Breast epithelium (tissue), 4 donors: ENCODE measurements at regions of chr9 and their contacts with region 1.

Region 1: DNA sequence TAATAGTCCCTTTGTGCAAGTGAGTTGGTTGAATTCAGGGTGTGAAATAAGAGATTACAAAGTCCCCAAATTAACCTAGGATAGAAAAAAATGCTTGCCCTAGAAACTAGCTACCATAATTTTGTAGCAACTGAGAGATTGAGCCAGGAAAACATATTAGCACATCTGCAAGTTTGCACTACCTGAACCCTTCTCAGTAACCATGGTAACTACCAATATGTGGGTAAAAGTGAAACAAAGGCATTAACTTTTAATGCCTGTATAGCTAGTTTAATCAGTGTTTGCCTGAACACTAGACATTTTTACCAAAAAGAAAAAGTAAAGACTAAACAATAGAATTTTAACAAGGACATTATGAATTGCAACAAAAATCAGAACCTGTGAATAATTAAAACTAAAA is 45.8 kb upstream of the CKS2 start:
- DNase-seq: no peak
- H3K4me3 ChIP-seq: no peak overlapping the region
- H3K27ac ChIP-seq: no peak overlapping the region
- H3K4me1 ChIP-seq: no peaks in the 10 kb centered on the region
- H3K27me3 ChIP-seq: no peaks in the 10 kb centered on the region
- CTCF ChIP-seq: no peak
- POLR2A ChIP-seq: no peak

Region 2: DNA sequence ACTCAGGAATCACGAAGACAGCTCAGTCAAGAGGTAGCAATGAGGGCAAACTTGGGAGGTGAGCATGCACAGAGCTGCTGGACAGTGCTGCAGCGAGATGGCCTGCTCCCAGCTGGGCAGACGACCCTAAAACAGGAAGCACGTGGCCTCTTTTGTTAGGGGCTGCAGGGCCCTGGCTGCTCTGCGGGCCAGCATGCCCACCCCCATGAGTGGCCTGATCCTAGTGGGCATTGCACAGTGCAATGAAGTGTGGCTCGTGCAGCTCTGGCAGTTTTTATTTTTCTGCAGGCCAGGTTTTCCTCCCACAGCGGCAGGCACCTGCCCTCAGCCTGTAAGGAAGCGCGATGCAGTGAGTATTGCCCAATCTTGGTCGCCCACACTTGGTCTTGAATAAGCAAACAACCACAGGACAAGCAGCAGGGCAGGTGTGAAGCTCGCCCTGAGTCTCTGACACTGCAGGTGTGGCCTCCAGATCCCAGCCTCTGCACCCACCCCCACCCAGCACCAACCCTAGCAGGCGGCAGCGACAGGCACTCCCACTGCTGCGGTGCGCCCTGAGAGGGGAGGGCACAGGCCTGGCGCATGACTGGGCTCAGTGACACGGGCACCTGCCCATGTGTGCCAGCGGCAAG is 171.9 kb after region 1 on chr9:
- intact Hi-C with region 1: no loop called
- DNase-seq: peak in 1 of 2 donors; percentile 20
- H3K4me3 ChIP-seq: no peak overlapping the region
- H3K27ac ChIP-seq: no peak overlapping the region
- H3K4me1 ChIP-seq: no peaks in the 10 kb centered on the region
- H3K27me3 ChIP-seq: no peaks in the 10 kb centered on the region
- CTCF ChIP-seq: no peak
- POLR2A ChIP-seq: no peak

Region 3: GRCh38 chr9:90018688-90019087 is 753.5 kb after region 1 on chr9:
- intact Hi-C with region 1: loop called (anchors 5 kb)
- DNase-seq: no peak
- H3K4me3 ChIP-seq: no peak overlapping the region
- H3K27ac ChIP-seq: no peak overlapping the region
- H3K4me1 ChIP-seq: peaks cover 0 to 8% of the 10 kb centered on the region in 2 donors
- H3K27me3 ChIP-seq: no peaks in the 10 kb centered on the region
- CTCF ChIP-seq: no peak
- POLR2A ChIP-seq: no peak